Sigmoid colon (tissue), 7 donors: ENCODE measurements at regions of chr6 and their contacts with region 1.

Region 1: GRCh38 chr6:16670183-16670582 is 91.1 kb downstream of the ATXN1 start:
- DNase-seq: no peak
- H3K4me3 ChIP-seq: no peak overlapping the region
- H3K27ac ChIP-seq: peak overlapping the region in 3 of 4 donors; percentile 27 to 66 (median 37)
- H3K4me1 ChIP-seq: peaks cover 0 to 81% (median 73%) of the 10 kb centered on the region in 4 donors
- H3K27me3 ChIP-seq: no peaks in the 10 kb centered on the region
- CTCF ChIP-seq: no peak
- EP300 ChIP-seq: no peak
- POLR2A ChIP-seq: no peak

Region 2: DNA sequence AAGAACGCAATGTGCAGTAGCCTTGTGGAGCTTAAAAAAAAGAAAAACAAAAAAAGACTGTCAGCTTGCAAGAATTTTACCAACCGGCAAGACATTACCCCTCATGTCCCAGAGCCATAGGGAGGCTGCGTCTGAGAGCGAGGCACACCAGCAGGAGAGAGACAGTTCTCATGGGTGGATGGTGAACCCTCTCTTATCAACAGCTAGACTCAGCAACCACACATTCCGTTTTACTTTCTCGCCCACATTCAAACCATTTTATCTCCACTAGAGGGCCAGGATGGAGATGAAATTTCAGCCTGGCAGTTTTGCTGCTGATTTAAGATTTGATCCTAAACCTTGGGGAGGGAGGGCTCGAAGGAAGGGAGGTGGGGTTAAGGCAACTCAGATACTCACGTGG is 155.9 kb before region 1 on chr6:
- intact Hi-C with region 1: loop called (anchors 5 kb)
- DNase-seq: no peak
- H3K4me3 ChIP-seq: no peak overlapping the region
- H3K27ac ChIP-seq: no peak overlapping the region
- H3K4me1 ChIP-seq: peaks cover 0 to 35% (median 27%) of the 10 kb centered on the region in 4 donors
- H3K27me3 ChIP-seq: no peaks in the 10 kb centered on the region
- CTCF ChIP-seq: peak in 1 of 4 experiments; percentile 37
- EP300 ChIP-seq: no peak
- POLR2A ChIP-seq: no peak

Region 3: DNA sequence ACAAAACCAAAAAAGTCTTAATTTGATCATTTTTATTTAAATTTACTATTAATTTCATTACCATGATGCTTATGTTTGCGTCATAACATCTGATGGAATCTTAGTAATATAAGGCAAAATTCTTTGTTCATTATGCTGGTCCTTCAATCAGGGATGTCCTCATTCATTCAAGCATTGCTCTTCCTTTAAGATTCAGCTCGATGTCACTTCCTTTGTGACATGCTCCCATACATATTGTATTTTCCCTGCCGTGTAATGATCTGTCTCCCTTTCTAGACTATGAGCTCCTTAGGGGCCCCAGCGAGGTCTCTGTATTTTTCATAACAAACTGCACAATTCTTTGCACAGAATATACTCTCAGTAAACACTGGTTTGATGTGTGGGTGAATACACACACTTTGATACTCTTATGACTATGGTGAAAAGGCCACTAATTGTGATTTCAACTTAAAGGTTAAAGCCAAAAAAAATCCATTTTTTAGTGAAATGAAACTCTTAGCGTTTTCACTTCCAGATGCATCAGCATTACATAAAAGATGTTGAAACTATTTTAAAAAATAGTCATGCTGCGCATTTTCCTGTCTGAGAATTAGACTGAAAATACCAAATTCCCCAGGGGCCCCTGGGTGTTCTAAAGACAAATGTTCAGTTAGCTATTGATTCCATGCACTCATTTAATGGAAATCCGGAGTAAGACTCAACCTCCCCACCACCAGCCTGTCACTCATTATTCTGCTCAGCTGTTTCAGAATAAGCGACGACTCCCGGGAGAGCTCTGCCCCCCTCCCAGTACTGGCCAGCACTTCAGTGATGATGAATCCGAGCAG is 78.6 kb before region 1 on chr6:
- intact Hi-C with region 1: no loop called
- DNase-seq: no peak
- H3K4me3 ChIP-seq: no peak overlapping the region
- H3K27ac ChIP-seq: no peak overlapping the region
- H3K4me1 ChIP-seq: no peaks in the 10 kb centered on the region
- H3K27me3 ChIP-seq: no peaks in the 10 kb centered on the region
- CTCF ChIP-seq: no peak
- EP300 ChIP-seq: no peak
- POLR2A ChIP-seq: no peak

Region 4: DNA sequence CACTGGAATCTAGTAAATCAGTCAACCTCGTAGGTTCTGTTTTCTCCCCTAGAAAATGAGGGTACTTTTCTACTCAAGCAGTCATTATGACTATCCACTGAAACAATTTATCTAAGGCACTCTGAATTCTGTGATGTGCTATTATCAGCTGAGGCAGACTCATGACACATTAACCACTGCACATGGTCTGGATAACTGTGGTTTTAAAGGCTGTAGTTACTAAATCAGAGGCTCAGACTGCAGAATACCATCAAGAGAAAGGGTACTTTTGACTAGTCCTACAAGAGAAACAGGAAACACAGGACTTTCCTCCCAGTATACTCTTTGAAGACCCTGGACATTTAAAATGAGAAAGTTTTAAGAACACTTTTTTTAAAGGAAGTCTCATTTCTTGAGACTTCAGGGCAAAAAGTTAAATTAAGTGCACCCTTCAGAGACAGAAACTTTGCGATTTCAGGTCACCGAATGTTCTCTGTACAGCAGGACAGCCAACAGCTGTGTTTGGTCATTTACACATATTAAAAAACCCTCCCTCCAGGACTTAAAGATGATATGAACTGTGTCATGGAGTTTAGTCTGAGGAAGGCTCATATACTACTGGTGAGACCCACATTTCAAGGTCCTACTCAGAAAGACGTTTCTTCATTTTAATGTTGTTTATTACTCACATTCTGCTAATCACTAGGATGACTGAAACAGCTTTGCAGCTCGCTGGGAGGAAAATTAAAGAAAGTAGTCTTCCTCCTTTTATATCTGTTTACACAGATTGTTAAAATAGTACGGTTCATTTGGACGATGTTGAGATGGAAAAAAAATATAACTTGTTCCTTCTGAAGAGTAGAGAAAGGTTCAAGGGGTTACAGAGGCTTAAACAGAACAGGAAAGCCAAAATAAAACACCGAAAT is 71.2 kb after region 1 on chr6:
- intact Hi-C with region 1: no loop called
- DNase-seq: no peak
- H3K4me3 ChIP-seq: no peak overlapping the region
- H3K27ac ChIP-seq: peak overlapping the region in 3 of 4 donors; percentile 40 to 81 (median 78)
- H3K4me1 ChIP-seq: peaks cover 0 to 89% (median 76%) of the 10 kb centered on the region in 4 donors
- H3K27me3 ChIP-seq: no peaks in the 10 kb centered on the region
- CTCF ChIP-seq: no peak
- EP300 ChIP-seq: no peak
- POLR2A ChIP-seq: no peak